SK-N-SH (cell line): ENCODE measurements at regions of chr19 and their contacts with region 1.

Region 1: DNA sequence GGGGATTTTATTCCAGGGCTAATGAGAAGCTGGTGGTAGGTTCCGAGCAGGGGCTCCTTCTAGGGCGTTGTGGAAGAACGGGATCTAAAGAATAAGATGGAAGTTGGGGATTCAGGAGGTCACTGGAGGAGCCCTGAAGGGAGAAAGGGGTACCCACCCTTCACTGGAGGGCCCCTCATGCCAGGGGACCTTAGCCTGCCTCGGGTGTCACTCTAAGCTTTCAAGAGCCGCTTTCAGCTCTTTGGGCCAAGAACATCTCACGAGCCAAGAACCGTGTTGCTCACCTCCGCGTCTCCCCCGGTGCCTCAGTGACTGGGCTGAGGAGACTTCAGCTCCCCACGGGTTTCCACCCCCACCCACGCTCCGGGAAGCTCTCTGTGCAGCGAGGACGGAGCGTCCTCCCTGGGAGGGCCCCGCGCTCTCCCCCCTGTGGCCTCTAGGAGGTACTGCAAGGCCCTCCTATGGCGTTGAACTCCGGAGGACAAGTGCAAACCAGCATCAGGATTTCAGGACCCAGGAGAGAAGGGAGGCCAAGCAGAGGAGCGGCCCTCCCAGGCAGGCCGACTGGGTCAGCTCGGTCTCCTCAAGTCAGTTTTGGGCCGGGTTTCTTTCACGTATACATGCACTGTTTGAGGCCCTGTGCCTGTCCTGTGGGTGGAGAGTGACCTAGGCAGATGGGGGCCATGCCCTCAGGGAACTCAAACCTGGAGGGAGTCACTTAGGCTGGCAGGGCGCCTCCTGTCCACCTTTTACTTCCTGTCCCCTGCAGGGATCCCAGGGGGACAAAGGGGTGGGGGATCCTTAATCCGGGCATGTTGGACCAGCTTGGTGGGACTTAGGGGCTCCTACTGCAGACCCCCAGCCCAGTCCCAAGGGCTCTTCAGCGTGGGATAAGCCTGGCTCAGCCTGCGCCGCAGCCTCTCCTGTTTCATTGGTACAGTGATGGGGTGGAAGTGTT is 5.1 kb upstream of the KRTDAP start:
- DNase-seq: peak; percentile 87
- H3K4me3 ChIP-seq: no peak overlapping the region
- H3K27ac ChIP-seq: no peak overlapping the region
- H3K4me1 ChIP-seq: peaks cover 0 to 2% of the 10 kb centered on the region in 2 experiments; a peak in 1 of 4 replicates
- H3K27me3 ChIP-seq: peaks cover 89% of the 10 kb centered on the region
- CTCF ChIP-seq: peak; percentile 81
- EP300 ChIP-seq: no peak
- RAD21 ChIP-seq: peak; percentile 67

Region 2: GRCh38 chr19:35347171-35347929 is 148.0 kb before region 1 on chr19 and contains the start of gene FFAR1:
- CTCF ChIA-PET with region 1: interaction called, 111 read pairs
- POLR2A ChIA-PET with region 1: no interaction called
- DNase-seq: no peak
- H3K4me3 ChIP-seq: no peak within 1 kb of the TSS
- H3K27ac ChIP-seq: no peak within 1 kb of the TSS
- H3K4me1 ChIP-seq: no peaks in the 10 kb centered on the region
- H3K27me3 ChIP-seq: peaks cover 91% of the 10 kb centered on the region
- CTCF ChIP-seq: no peak
- EP300 ChIP-seq: no peak
- RAD21 ChIP-seq: no peak
- polyA plus RNA-seq, gene FFAR1: not detected in 2 replicates

Region 3: GRCh38 chr19:35478803-35479601 is 16.4 kb before region 1 on chr19:
- CTCF ChIA-PET with region 1: interaction called, 40 read pairs
- POLR2A ChIA-PET with region 1: interaction called, 4 read pairs
- DNase-seq: no peak
- H3K4me3 ChIP-seq: no peak overlapping the region
- H3K27ac ChIP-seq: no peak overlapping the region
- H3K4me1 ChIP-seq: no peaks in the 10 kb centered on the region; a peak in 1 of 4 replicates
- H3K27me3 ChIP-seq: peaks cover 66% of the 10 kb centered on the region; the same call in 1 of the 2 replicates
- CTCF ChIP-seq: no peak; the same call in 1 of the 2 replicates
- EP300 ChIP-seq: no peak
- RAD21 ChIP-seq: no peak

Region 4: GRCh38 chr19:35484252-35485036 is 10.9 kb before region 1 on chr19:
- CTCF ChIA-PET with region 1: interaction called, 40 read pairs
- POLR2A ChIA-PET with region 1: interaction called, 4 read pairs
- DNase-seq: no peak
- H3K4me3 ChIP-seq: no peak overlapping the region
- H3K27ac ChIP-seq: no peak overlapping the region
- H3K4me1 ChIP-seq: no peaks in the 10 kb centered on the region; a peak in 1 of 4 replicates
- H3K27me3 ChIP-seq: peaks cover 59% of the 10 kb centered on the region
- CTCF ChIP-seq: no peak
- EP300 ChIP-seq: no peak
- RAD21 ChIP-seq: no peak

Region 5: DNA sequence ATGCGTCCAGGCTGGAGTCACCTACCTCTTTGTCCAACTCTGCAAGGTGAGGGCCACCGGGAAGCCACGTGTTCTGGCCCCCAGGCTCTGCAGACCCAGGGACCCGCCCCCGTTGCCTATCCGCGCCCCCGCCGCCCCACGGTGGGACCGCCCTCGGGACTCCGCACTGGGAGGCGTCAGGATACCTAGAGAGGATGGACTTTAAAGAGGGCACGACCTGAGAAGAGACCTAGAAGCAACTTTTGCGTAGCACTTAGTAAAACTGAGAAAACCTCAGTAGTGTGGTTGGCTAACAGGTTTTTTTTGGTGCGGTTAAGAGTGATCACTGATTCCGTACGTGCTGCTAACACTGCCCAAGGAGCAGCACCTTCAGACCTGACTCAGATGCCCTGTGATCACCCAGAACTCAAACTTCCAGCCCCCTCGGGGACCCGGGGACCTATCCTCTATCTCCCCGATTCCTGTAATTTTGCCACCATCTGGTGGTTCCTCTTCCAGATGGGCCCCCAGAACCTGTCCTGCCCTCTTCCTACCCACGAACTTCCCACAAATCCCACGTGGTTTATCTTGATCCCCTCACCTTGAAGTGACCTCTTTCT is 50.6 kb after region 1 on chr19:
- CTCF ChIA-PET with region 1: no interaction called
- POLR2A ChIA-PET with region 1: no interaction called
- DNase-seq: peak; percentile 79
- H3K4me3 ChIP-seq: peak overlapping the region; percentile 79 to 96
- H3K27ac ChIP-seq: peak overlapping the region; percentile 52 to 77; a peak in 2 of 4 replicates
- H3K4me1 ChIP-seq: peaks cover 5 to 19% of the 10 kb centered on the region in 2 experiments; a peak in 2 of 4 replicates
- H3K27me3 ChIP-seq: no peaks in the 10 kb centered on the region
- CTCF ChIP-seq: no peak
- EP300 ChIP-seq: no peak
- RAD21 ChIP-seq: no peak

Region 6: DNA sequence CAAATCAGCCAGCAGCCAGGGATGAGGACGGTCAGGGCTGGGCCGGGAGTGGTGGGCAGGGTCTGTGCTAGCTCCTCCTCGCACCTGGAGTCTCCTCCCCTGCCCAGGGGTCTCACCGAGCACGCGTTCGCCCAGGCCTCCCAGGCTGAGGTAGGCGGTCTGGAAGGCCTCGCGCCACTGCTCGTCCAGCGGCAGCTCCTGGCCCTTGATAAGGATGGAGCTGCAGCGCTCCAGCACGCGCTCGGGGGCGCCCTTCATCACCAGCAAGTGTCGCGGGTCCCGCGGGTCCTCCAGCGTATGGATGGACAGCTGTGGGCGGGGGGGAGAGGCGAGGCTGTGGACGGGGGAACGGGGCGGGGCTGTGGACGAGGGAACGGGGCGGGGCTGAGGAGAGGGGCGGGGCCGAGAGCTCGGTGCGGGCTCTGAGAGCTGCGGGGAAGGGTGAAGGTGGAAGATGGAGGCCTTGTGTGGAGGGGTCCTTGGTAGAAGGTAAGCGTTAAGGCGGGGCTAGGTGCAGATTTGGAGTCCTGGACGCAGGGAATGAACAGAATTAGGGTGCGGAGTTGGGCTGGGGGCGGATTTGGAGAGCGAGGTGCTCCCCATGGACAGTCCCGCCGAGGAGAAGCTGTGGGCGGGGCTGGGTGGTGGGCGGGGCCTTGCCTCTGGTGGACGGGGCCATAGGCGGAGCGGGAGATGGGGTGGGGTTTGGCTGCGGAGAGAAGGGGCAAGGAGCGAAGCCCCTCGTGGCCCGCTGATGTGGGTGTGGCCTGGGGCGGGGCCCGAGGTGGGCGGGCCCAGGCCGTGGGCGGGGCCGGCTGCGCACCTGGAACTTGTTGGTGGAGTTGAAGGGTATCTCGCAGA is 62.4 kb after region 1 on chr19:
- CTCF ChIA-PET with region 1: no interaction called
- POLR2A ChIA-PET with region 1: no interaction called
- DNase-seq: peak; percentile 96
- H3K4me3 ChIP-seq: peak overlapping the region; percentile 37 to 43; a peak in 3 of 4 replicates
- H3K27ac ChIP-seq: no peak overlapping the region
- H3K4me1 ChIP-seq: peaks cover 0 to 11% of the 10 kb centered on the region in 2 experiments; a peak in 1 of 4 replicates
- H3K27me3 ChIP-seq: peaks cover 43% of the 10 kb centered on the region
- CTCF ChIP-seq: no peak
- EP300 ChIP-seq: no peak
- RAD21 ChIP-seq: no peak; the same call in 1 of the 2 replicates